ENCODE measurements at regions of chr2 and their contacts with region 1.

Region 1: DNA sequence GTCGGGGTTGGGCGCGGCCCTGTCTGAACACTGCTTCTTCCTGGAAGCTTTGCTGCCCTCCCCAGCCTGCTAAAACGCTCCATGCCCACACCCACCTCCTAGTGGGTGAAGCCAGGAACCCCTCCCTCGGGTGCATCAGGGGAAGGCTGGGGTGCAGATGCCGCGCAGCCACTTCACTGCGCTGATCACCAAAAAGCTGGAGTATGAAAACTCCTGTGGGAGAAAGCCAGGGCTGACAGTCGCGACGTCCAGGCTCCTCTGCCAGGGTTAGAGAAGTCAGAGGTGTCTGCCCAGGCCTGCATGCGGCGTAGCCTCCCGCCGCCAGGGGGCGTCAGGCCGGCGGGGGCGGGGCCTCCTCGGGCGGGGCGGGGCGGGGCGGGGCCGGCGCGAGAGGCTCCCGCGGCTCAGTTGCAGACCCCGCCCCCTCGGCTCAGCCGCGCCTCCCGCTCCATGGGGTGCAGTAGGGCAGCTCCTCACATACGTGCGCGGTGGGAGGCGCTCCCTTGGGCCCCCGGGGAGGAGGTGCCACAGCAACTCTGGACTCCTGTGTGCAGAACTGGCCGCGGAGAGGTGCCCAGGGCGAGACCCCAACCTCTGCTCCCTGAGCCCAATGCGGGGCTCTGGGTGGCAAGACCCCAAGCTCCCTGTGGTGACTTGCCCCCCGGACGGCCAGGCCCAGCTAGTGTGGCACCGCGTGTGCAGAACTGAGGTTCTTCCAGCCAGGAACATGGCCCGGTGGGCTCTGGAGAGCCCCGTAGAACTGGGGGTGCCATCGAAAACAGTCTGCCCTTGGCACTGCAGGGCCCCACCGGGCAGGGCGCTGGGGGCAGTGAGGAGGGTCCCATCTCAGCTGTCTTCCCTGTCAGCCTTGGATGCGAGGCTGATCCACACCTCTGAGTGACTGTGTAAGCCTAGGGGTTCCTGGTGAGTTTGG is 1.8 kb upstream of the RNPEPL1 start:
- DNase-seq: peak; percentile 98
- ATAC-seq: peak; percentile 69
- H3K4me3 Mint-ChIP-seq: peak overlapping the region; percentile 91
- H3K27ac Mint-ChIP-seq: peak overlapping the region; percentile 97
- H3K4me1 Mint-ChIP-seq: peaks cover 76% of the 10 kb centered on the region
- H3K27me3 Mint-ChIP-seq: no peaks in the 10 kb centered on the region

Region 2: GRCh38 chr2:240500561-240501423 is 65.7 kb before region 1 on chr2:
- CTCF ChIA-PET with region 1: no interaction called
- DNase-seq: peak; percentile 33
- ATAC-seq: no peak
- H3K4me3 Mint-ChIP-seq: no peak overlapping the region
- H3K27ac Mint-ChIP-seq: no peak overlapping the region
- H3K4me1 Mint-ChIP-seq: no peaks in the 10 kb centered on the region
- H3K27me3 Mint-ChIP-seq: no peaks in the 10 kb centered on the region

Region 3: DNA sequence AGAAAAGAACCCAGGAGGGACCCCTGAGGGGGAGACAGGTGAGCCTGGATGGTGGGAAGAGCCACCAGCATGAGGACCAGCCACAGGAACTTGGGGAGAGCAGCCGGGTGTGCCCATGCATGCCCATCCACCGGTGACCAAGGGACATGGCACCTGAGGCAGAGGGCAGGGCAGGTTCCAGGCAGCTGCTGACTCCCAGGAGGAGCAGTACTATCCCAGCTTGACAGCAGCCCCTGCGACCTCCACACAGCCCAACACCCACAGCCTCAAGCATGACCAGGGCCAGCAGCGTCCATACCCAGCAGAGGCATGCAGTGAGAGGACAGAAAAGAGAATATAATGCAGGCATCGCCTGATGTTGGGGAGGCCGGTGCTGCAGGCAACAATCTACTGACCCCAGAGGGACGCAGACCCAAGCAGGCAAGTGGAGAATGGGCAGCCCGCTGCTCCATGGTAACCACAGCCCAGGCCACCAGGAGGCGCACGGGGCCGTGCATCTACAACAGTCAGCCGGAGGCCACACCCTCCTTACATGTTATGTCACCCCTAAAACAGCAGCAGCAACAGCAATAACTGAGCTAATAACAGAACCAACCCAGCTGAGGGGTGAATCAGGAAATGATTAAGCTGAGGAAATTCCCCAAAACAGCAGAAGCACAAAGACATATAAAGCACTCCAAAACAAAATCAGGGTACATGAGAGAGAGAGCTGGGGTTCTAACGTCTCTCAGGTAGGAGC is 52.8 kb before region 1 on chr2:
- CTCF ChIA-PET with region 1: interaction called, 37 read pairs
- DNase-seq: peak; percentile 91
- ATAC-seq: peak; percentile 97
- H3K4me3 Mint-ChIP-seq: no peak overlapping the region
- H3K27ac Mint-ChIP-seq: peak overlapping the region; percentile 71
- H3K4me1 Mint-ChIP-seq: peaks cover 15% of the 10 kb centered on the region
- H3K27me3 Mint-ChIP-seq: no peaks in the 10 kb centered on the region

Region 4: GRCh38 chr2:240528406-240529040 is 37.9 kb before region 1 on chr2:
- CTCF ChIA-PET with region 1: no interaction called
- DNase-seq: no peak
- ATAC-seq: no peak
- H3K4me3 Mint-ChIP-seq: no peak overlapping the region
- H3K27ac Mint-ChIP-seq: no peak overlapping the region
- H3K4me1 Mint-ChIP-seq: no peaks in the 10 kb centered on the region
- H3K27me3 Mint-ChIP-seq: no peaks in the 10 kb centered on the region

Region 5: GRCh38 chr2:240579771-240580614 is 13.5 kb after region 1 on chr2:
- CTCF ChIA-PET with region 1: interaction called, 99 read pairs
- DNase-seq: peak; percentile 90
- ATAC-seq: peak; percentile 88
- H3K4me3 Mint-ChIP-seq: no peak overlapping the region
- H3K27ac Mint-ChIP-seq: peak overlapping the region; percentile 80
- H3K4me1 Mint-ChIP-seq: peaks cover 46% of the 10 kb centered on the region
- H3K27me3 Mint-ChIP-seq: no peaks in the 10 kb centered on the region

Region 6: GRCh38 chr2:240586198-240586918 is 19.9 kb after region 1 on chr2 and contains the start of gene CAPN10:
- CTCF ChIA-PET with region 1: interaction called, 99 read pairs
- DNase-seq: peak; percentile 98
- ATAC-seq: peak; percentile 91
- H3K4me3 Mint-ChIP-seq: peak within 1 kb of the TSS; percentile 91
- H3K27ac Mint-ChIP-seq: peak within 1 kb of the TSS; percentile 89
- H3K4me1 Mint-ChIP-seq: peaks cover 47% of the 10 kb centered on the region
- H3K27me3 Mint-ChIP-seq: no peaks in the 10 kb centered on the region
- total RNA-seq, gene CAPN10: 54.0 to 75.8 TPM

Region 7: GRCh38 chr2:240604291-240604938 is 37.9 kb after region 1 on chr2:
- CTCF ChIA-PET with region 1: interaction called, 12 read pairs
- DNase-seq: no peak
- ATAC-seq: peak; percentile 39
- H3K4me3 Mint-ChIP-seq: no peak overlapping the region
- H3K27ac Mint-ChIP-seq: no peak overlapping the region
- H3K4me1 Mint-ChIP-seq: peaks cover 10% of the 10 kb centered on the region
- H3K27me3 Mint-ChIP-seq: no peaks in the 10 kb centered on the region

Region 8: DNA sequence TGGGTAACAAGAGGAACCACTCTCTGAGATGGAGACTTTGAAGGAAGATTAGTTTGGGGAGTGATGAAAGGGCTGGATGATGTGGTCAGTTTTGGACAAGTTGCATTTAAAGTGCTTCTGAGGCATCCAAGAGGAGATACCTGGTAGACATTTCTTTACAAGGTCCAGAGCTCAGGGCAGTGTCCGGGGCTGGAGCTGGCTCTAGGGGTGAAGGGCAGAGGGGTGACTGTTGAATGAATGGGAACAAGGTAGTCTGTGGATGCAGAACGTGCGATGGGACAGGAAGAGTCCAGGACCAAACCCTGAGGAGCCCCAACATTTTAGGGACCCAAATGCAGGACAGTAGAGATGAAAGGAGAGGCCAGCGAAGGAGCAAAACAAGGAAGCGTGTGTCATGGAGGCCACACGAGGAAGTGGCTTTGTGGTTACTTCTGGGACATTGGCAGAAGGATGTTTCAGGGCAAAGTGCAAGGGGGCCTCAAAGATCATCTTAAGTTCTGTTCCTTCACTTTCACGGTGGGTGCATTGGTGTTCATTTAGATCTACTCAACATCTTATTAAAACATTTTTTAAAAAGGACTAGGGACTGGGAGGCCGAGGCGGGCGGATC is 45.2 kb after region 1 on chr2:
- CTCF ChIA-PET with region 1: interaction called, 25 read pairs
- DNase-seq: peak; percentile 85
- ATAC-seq: peak; percentile 48
- H3K4me3 Mint-ChIP-seq: peak overlapping the region; percentile 49
- H3K27ac Mint-ChIP-seq: no peak overlapping the region
- H3K4me1 Mint-ChIP-seq: peaks cover 42% of the 10 kb centered on the region
- H3K27me3 Mint-ChIP-seq: no peaks in the 10 kb centered on the region

Region 9: DNA sequence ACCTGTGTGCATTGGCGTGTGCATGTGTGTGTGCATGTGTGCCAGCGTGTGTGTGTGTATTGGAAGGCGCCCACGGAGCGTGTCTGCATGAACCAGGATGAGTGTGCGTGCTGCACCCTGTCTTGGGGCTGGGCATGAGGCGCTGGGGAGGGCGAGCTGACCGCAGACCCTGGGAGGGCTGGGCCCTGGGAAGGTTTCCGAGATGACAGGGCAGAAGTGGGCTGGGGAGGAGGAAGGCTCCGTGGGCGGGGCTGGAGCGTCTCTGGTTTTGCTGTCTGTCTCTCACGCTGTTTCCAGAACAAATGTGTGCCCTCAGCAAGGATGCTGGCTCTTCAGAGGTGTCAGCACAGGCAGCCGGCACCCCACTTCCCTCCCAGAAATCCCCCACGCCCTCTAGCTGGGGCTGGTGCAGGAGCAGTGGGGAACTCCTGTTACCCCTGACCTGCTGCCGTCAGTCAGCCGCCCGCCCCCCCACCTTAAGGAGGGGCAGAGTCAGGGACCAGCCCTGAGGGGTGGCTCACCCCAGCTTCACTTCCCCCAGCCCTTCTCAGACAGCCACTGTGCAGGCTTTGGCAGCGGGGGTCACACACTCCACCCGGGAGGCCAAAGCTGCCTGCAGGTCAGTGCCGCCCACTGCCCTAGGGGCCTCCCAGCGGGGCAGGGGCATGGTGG is 58.6 kb after region 1 on chr2 and contains the start of gene GPR35:
- CTCF ChIA-PET with region 1: interaction called, 35 read pairs
- DNase-seq: peak; percentile 94
- ATAC-seq: peak; percentile 66
- H3K4me3 Mint-ChIP-seq: peak within 1 kb of the TSS; percentile 74
- H3K27ac Mint-ChIP-seq: peak within 1 kb of the TSS; percentile 93
- H3K4me1 Mint-ChIP-seq: peaks cover 62% of the 10 kb centered on the region
- H3K27me3 Mint-ChIP-seq: no peaks in the 10 kb centered on the region
- total RNA-seq, gene GPR35: 14.4 to 35.4 TPM

Measured in activated CD8-positive, alpha-beta memory T cell treated with anti-CD3 and anti-CD28 coated beads, Interleukin-2, amount 10 ng/mL, durations not matched to agents 7 days and 5 days (primary cell).